GM12878 (cell line): ENCODE measurements at regions of chr2 and their contacts with region 1.

Region 1: GRCh38 chr2:68362069-68362468 is 3.0 kb upstream of the PLEK start:
- DNase-seq: peak; percentile 78
- ATAC-seq: peak; percentile 54
- H3K4me3 ChIP-seq: peak overlapping the region; percentile 33; the same call in 1 of the 2 replicates
- H3K27ac ChIP-seq: peak overlapping the region; percentile 94
- H3K4me1 ChIP-seq: peaks cover 21% of the 10 kb centered on the region
- H3K27me3 ChIP-seq: no peaks in the 10 kb centered on the region
- CTCF ChIP-seq: peak; percentile 75 to 92 (median 81)
- EP300 ChIP-seq: peak; percentile 34 to 68; a peak in 1 of 4 replicates
- POLR2A ChIP-seq: peak; percentile 68
- RAD21 ChIP-seq: peak; percentile 97

Region 2: GRCh38 chr2:68251187-68251854 is 110.7 kb before region 1 on chr2:
- CTCF ChIA-PET with region 1: interaction called, 5 read pairs
- POLR2A ChIA-PET with region 1: interaction called, 7 read pairs
- RAD21 ChIA-PET with region 1: interaction called, 4 read pairs
- SMC1A ChIA-PET with region 1: interaction called, 3 read pairs
- in situ Hi-C with region 1: no loop called
- intact Hi-C with region 1: loop called (anchors 5 kb)
- DNase-seq: peak; percentile 64
- ATAC-seq: peak; percentile 70
- H3K4me3 ChIP-seq: peak overlapping the region; percentile 85
- H3K27ac ChIP-seq: peak overlapping the region; percentile 91
- H3K4me1 ChIP-seq: peaks cover 18% of the 10 kb centered on the region
- H3K27me3 ChIP-seq: no peaks in the 10 kb centered on the region
- CTCF ChIP-seq: peak; percentile 70 to 79 (median 76)
- EP300 ChIP-seq: no peak
- POLR2A ChIP-seq: no peak; the same call in 1 of the 2 replicates
- RAD21 ChIP-seq: peak; percentile 71

Region 3: DNA sequence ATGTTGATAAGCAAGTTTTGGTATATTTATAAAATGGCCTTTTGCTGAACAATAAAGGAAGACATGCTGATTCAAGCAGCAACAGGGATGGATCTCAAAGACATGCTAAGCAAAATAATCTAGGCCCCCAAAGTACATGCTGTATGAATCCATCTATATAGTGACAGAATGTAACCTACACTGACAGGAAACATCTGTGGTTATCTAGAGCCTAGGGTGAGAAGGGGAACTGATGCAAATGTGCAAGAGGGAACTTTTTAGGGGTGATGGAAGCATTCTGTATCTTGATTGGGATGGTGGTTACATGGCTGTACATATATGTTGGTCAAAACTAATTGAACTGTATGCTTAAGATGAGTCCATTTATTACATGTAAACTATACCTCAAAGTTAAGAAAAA is 66.6 kb before region 1 on chr2:
- CTCF ChIA-PET with region 1: interaction called, 14 read pairs
- POLR2A ChIA-PET with region 1: no interaction called
- RAD21 ChIA-PET with region 1: interaction called, 3 read pairs
- SMC1A ChIA-PET with region 1: interaction called, 11 read pairs
- in situ Hi-C with region 1: no loop called
- intact Hi-C with region 1: no loop called
- DNase-seq: no peak
- ATAC-seq: peak; percentile 79
- H3K4me3 ChIP-seq: no peak overlapping the region
- H3K27ac ChIP-seq: no peak overlapping the region
- H3K4me1 ChIP-seq: peaks cover 6% of the 10 kb centered on the region
- H3K27me3 ChIP-seq: no peaks in the 10 kb centered on the region
- CTCF ChIP-seq: no peak
- EP300 ChIP-seq: no peak
- POLR2A ChIP-seq: no peak
- RAD21 ChIP-seq: no peak

Region 4: GRCh38 chr2:68379184-68379708 is 17.2 kb after region 1 on chr2:
- CTCF ChIA-PET with region 1: interaction called, 9 read pairs
- POLR2A ChIA-PET with region 1: interaction called, 53 read pairs
- RAD21 ChIA-PET with region 1: interaction called, 82 read pairs
- SMC1A ChIA-PET with region 1: interaction called, 51 read pairs
- in situ Hi-C with region 1: no loop called
- intact Hi-C with region 1: no loop called
- DNase-seq: no peak
- ATAC-seq: peak; percentile 55
- H3K4me3 ChIP-seq: peak overlapping the region; percentile 48; the same call in 1 of the 2 replicates
- H3K27ac ChIP-seq: peak overlapping the region; percentile 80
- H3K4me1 ChIP-seq: peaks cover 71% of the 10 kb centered on the region
- H3K27me3 ChIP-seq: no peaks in the 10 kb centered on the region
- CTCF ChIP-seq: no peak
- EP300 ChIP-seq: peak; percentile 60 to 73; a peak in 3 of 4 replicates
- POLR2A ChIP-seq: no peak
- RAD21 ChIP-seq: no peak

Region 5: DNA sequence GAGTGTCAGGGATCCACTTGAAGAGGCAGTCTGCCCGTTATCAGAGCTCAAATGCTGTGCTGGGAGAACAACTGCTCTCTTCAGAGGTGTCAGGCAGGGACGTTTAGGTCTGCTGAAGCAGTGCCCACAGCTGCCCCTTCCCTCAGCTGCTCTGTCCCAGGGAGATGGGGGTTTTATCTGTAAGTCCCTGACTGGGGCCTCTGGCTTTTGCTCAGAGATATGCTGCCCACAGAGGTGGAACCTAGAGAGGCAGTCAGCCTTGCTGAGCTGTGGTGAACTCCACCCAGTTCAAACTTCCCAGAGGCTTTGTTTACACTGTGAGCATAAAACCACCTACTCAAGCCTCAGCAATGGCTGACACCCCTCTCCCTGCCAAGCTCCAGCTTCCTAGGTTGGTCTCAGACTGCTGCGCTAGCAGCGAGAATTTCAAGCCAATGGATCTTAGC is 41.2 kb after region 1 on chr2:
- CTCF ChIA-PET with region 1: interaction called, 5 read pairs
- POLR2A ChIA-PET with region 1: interaction called, 18 read pairs
- RAD21 ChIA-PET with region 1: interaction called, 8 read pairs
- SMC1A ChIA-PET with region 1: interaction called, 8 read pairs
- in situ Hi-C with region 1: no loop called
- intact Hi-C with region 1: no loop called
- DNase-seq: no peak
- ATAC-seq: peak; percentile 89
- H3K4me3 ChIP-seq: no peak overlapping the region
- H3K27ac ChIP-seq: peak overlapping the region; percentile 52
- H3K4me1 ChIP-seq: peaks cover 25% of the 10 kb centered on the region
- H3K27me3 ChIP-seq: no peaks in the 10 kb centered on the region
- CTCF ChIP-seq: no peak
- EP300 ChIP-seq: no peak
- POLR2A ChIP-seq: no peak
- RAD21 ChIP-seq: no peak